ENCODE measurements at regions of chr7 and their contacts with region 1.

Region 1: DNA sequence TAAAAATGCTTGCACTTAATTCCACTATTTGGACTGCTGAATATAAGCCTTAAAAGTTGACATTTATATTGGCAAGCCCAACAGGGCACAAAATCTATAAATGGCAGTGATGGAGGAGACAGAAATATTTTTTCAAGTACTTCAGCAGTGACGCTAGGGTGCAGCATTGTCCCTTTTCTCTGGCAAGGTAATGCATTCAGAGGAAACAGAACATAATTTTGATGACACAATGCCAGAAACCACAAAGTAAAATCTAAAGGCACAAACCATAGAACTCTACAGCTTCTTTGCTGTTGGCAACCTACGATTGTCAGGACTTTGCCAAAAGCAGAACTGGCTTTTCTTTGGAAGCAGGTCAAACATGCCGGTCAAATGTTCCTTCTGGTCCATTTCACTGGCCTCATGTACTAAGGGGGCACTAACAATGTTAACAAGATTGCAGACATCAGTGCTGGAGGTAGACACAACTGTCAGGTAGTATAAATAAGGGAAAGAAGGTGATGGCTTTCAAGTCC is 30.9 kb upstream of the FAM133B start:
- DNase-seq: peak; percentile 82
- ATAC-seq: peak; percentile 76
- H3K4me3 Mint-ChIP-seq: peak overlapping the region; percentile 19
- H3K27ac Mint-ChIP-seq: peak overlapping the region; percentile 82
- H3K4me1 Mint-ChIP-seq: peaks cover 45% of the 10 kb centered on the region
- H3K27me3 Mint-ChIP-seq: no peaks in the 10 kb centered on the region
- CTCF ChIP-seq: peak; percentile 75

Region 2: GRCh38 chr7:92547579-92547978 is 73.5 kb before region 1 on chr7:
- CTCF ChIA-PET with region 1: no interaction called
- POLR2A ChIA-PET with region 1: no interaction called
- intact Hi-C with region 1: no loop called
- DNase-seq: no peak
- ATAC-seq: no peak
- H3K4me3 Mint-ChIP-seq: no peak overlapping the region
- H3K27ac Mint-ChIP-seq: no peak overlapping the region
- H3K4me1 Mint-ChIP-seq: no peaks in the 10 kb centered on the region
- H3K27me3 Mint-ChIP-seq: no peaks in the 10 kb centered on the region
- CTCF ChIP-seq: no peak

Region 3: DNA sequence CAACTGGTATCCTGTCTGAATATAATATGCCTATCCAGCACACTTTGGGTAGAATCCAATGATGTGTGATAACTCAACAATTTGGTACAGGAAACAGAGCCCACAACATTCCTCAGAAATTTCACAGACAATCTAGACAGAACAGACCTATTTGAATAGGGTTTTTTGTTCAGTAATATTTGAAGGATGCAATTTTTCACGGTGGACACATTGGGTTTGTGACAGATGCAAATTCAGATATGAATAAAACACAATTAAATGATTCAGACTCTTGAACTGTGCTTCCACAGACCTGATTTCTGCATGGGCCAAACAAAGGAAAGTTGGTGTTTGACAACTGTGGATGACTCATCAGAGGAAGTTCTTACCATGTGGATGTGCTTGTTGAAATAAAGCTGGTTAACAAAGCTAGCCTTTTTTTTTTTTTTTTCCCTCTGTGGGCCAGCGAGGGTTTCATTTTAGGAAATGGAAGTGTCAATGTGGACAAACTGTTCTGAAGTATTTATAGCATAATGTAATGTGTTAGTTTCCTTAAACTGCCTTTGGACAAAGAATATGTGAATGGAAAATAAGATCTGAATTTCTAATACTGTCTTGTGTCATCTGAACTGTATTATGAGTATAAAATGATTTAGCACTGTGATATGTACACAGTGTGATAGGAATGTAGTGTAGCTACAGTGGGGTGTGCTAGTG is 12.3 kb after region 1 on chr7:
- CTCF ChIA-PET with region 1: interaction called, 25 read pairs
- POLR2A ChIA-PET with region 1: interaction called, 3 read pairs
- intact Hi-C with region 1: no loop called
- DNase-seq: peak; percentile 54
- ATAC-seq: peak; percentile 17
- H3K4me3 Mint-ChIP-seq: peak overlapping the region; percentile 39
- H3K27ac Mint-ChIP-seq: peak overlapping the region; percentile 96
- H3K4me1 Mint-ChIP-seq: peaks cover 76% of the 10 kb centered on the region
- H3K27me3 Mint-ChIP-seq: no peaks in the 10 kb centered on the region
- CTCF ChIP-seq: no peak

Region 4: GRCh38 chr7:92698237-92698841 is 77.3 kb after region 1 on chr7:
- CTCF ChIA-PET with region 1: interaction called, 13 read pairs
- POLR2A ChIA-PET with region 1: no interaction called
- intact Hi-C with region 1: no loop called
- DNase-seq: no peak
- ATAC-seq: no peak
- H3K4me3 Mint-ChIP-seq: no peak overlapping the region
- H3K27ac Mint-ChIP-seq: no peak overlapping the region
- H3K4me1 Mint-ChIP-seq: peaks cover 24% of the 10 kb centered on the region
- H3K27me3 Mint-ChIP-seq: no peaks in the 10 kb centered on the region
- CTCF ChIP-seq: no peak

Region 5: DNA sequence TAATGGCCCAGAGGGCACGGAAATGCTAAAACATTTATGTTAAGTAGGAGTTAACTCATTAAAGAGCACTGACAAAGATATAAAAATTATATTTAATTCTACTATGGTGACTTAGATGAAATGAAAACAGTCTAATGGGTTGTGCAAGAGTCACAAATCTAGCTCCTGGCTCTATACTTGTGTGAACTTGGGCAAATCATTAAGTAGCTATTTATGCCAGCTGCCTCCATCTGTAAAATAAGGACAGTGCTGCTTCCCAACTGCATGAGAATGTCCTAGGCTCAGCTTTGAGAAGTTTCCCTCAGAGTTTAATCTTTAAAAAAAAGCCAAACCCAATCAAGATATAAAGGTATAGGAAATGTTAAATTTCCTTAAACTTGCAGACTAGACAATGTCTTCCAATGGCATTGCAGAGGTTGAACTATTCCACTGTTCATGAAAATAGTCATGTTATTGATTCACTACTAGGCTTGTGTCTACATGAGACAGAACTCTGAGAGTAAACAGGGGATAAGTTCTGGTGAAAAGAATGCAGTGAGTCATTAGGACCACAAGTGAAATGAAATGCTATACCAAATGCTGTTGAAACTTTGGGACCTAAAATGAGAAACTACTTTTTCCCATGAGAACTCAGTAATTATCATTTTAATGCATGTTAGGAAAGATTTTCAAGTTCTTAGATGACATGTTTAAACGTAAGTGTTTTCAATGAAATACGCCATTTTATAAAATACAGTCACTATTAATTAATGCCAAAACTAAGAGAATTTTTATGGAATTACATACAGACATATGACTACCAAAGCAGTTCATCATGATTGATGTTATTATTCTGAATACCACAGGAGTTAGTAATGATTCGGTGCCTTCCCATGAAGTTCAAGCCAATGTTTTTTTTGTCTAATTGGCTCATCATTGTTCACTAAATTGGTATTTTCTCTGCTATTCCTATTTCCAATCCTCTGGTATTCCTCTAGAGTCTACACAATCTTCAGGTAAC is 131.1 kb after region 1 on chr7:
- CTCF ChIA-PET with region 1: no interaction called
- POLR2A ChIA-PET with region 1: no interaction called
- intact Hi-C with region 1: no loop called
- DNase-seq: no peak
- ATAC-seq: peak; percentile 61
- H3K4me3 Mint-ChIP-seq: no peak overlapping the region
- H3K27ac Mint-ChIP-seq: no peak overlapping the region
- H3K4me1 Mint-ChIP-seq: peaks cover 54% of the 10 kb centered on the region
- H3K27me3 Mint-ChIP-seq: no peaks in the 10 kb centered on the region
- CTCF ChIP-seq: no peak

Region 6: GRCh38 chr7:92833024-92833765 is 212.1 kb after region 1 on chr7:
- CTCF ChIA-PET with region 1: interaction called, 65 read pairs
- POLR2A ChIA-PET with region 1: interaction called, 5 read pairs
- intact Hi-C with region 1: loop called (anchors 2 kb)
- DNase-seq: peak; percentile 94
- ATAC-seq: peak; percentile 63
- H3K4me3 Mint-ChIP-seq: peak overlapping the region; percentile 94
- H3K27ac Mint-ChIP-seq: peak overlapping the region; percentile 93
- H3K4me1 Mint-ChIP-seq: peaks cover 43% of the 10 kb centered on the region
- H3K27me3 Mint-ChIP-seq: peaks cover 2% of the 10 kb centered on the region
- CTCF ChIP-seq: peak; percentile 82

Measured in activated CD8-positive, alpha-beta T cell treated with anti-CD3 and anti-CD28 coated beads for 36 hours (primary cell).